ENCODE measurements at regions of chr7 and their contacts with region 1.

Region 1: DNA sequence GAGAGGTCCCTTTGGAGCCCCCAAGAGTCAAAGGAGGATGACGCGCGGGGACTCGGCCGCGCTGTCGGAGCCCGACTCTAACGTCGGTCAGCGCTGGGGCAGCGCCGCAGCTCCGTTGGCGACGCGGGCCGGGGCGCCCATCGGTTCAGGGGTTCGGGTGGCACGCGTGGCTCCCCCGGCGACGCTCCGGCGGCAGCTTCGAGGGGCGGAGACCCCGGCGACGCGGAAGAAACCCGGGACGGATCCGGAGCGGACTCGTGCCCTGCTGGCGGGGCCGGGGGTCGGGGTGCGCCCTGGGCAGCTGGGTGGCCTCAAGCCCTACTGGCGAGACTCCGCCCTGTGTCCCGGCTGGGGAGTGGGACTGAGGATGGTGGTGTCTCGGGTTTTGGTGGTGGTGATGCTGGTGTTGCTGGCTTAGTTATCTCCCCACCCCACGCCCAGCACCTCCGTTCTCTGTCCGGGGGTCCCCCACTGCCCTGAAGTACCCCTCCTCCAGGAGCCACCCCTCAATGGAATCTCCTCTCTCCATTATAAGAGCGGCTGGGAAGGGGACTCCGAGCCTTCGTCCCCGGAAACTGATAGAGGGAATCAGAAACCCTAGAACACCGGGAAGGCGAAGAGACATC is at the start of gene NAT16:
- DNase-seq: no peak
- H3K4me3 ChIP-seq: no peak within 1 kb of the TSS
- H3K27ac ChIP-seq: no peak within 1 kb of the TSS
- H3K4me1 ChIP-seq: peaks cover 0 to 5% of the 10 kb centered on the region in 2 donors
- H3K27me3 ChIP-seq: peaks cover 59% of the 10 kb centered on the region
- CTCF ChIP-seq: no peak
- POLR2A ChIP-seq: no peak
- total RNA-seq, gene NAT16: 0.14 TPM in 1 of 9 donors, not detected in the others

Region 2: GRCh38 chr7:101099969-101100781 is 80.1 kb before region 1 on chr7:
- intact Hi-C with region 1: no loop called
- DNase-seq: peak; percentile 94 to 99 (median 98)
- H3K4me3 ChIP-seq: no peak overlapping the region
- H3K27ac ChIP-seq: peak overlapping the region; percentile 46 to 92 (median 81)
- H3K4me1 ChIP-seq: peaks cover 10 to 17% of the 10 kb centered on the region in 2 donors
- H3K27me3 ChIP-seq: no peaks in the 10 kb centered on the region
- CTCF ChIP-seq: no peak
- POLR2A ChIP-seq: peak in 1 of 2 donors; percentile 65

Region 3: GRCh38 chr7:101232141-101232850 is 52.1 kb after region 1 on chr7:
- intact Hi-C with region 1: loop called in 1 of 2 experiments (anchors 5 kb)
- DNase-seq: peak in 1 of 7 donors; percentile 11
- H3K4me3 ChIP-seq: peak overlapping the region in 1 of 4 donors; percentile 42
- H3K27ac ChIP-seq: peak overlapping the region in 1 of 5 donors; percentile 29
- H3K4me1 ChIP-seq: peaks cover 0 to 12% of the 10 kb centered on the region in 2 donors
- H3K27me3 ChIP-seq: no peaks in the 10 kb centered on the region
- CTCF ChIP-seq: no peak
- POLR2A ChIP-seq: no peak

Measured in adrenal gland (tissue), 19 donors.